Activated CD8-positive, alpha-beta T cell treated with anti-CD3 and anti-CD28 coated beads, Interleukin-2, amount 10 ng/mL, durations not matched to agents 7 days and 5 days (primary cell): ENCODE measurements at regions of chr1 and their contacts with region 1.

Region 1: DNA sequence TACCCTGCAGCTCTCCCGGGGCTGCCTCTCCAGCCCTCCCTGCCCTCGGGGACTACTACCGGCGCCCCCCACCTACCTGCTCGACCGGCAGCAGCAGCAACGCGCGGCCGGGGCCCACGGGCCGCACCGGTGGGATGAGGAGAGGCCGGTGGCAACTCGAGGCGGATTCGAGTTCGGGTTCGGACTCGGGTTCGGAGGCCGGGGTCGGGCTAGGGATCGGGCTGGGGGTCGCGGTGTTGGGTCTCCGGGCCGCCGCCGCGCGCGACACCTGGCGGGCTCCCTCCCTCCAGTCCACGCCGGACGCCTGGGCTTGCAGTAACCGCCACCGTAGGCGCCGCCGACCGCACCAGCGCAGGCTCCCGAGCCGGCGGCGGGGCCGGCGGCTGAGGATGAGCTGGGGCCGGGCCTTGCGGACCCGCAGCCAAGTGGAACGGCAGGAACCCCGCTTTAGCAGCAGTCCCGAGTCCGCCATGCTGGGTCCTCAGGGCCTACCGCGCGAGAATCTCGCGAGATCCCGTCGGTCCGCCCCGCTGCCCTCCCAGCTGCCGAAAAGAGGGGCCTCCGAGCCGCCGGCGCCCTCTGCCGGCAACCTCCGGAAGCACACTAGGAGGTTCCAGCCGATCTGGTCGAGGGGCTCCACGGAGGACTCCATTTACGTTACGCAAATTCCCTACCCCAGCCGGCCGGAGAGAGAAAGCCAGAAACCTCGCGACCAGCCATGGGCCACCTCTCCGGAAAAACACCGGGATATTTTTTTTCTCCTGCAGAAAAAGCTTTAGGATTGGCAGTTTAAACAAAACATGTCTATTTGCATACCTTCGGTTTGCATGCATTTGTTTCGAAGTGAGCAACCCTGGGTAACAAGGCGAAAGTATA is at the start of gene NOL9:
- DNase-seq: peak; percentile 97
- ATAC-seq: peak; percentile 98
- H3K4me3 Mint-ChIP-seq: peak within 1 kb of the TSS; percentile 75
- H3K27ac Mint-ChIP-seq: peak within 1 kb of the TSS; percentile 72
- H3K4me1 Mint-ChIP-seq: peaks cover 18% of the 10 kb centered on the region
- H3K27me3 Mint-ChIP-seq: no peaks in the 10 kb centered on the region
- total RNA-seq, gene NOL9: 39.8 to 43.6 TPM

Region 2: DNA sequence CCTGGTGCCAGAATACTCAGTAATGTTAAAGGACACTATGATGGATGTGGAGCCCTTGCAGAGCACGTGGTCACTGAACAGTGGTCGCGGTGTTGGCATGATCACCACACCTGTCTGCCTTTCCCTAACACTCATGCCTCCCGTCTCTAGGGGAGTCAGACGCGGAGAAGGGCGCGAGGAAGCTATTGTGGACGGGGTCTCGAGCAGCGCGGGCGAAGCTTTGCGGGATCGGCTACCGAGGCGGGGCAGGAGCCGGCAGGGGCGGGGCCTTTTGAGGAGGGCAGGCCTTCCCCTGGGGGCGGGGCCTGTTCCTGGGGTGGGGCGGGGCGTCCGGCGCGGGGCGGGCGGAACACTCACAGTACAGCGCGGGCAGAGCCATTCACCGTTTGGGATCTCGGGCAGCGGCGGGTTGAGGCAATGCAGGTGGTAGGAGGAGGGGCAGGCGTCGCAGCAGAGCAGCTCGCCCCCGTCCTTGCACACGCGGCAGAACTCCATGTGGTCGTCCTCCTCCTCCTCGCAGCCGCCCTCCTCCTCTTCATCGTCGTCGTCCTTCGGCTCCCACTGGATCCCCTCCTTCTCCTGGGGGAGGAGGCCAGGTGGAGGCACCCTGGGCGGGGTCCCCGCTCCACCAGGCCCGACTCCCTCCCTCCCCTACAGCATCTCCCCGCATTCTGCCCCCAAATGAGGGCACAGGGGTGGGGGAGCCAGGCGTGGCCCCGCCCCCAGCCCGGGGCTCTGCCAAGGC is 405.6 kb before region 1 on chr1:
- CTCF ChIA-PET with region 1: no interaction called
- POLR2A ChIA-PET with region 1: no interaction called
- DNase-seq: peak; percentile 66
- ATAC-seq: peak; percentile 88
- H3K4me3 Mint-ChIP-seq: no peak overlapping the region
- H3K27ac Mint-ChIP-seq: no peak overlapping the region
- H3K4me1 Mint-ChIP-seq: peaks cover 3% of the 10 kb centered on the region
- H3K27me3 Mint-ChIP-seq: peaks cover 3% of the 10 kb centered on the region

Region 3: GRCh38 chr1:6489799-6490180 is 64.5 kb before region 1 on chr1:
- CTCF ChIA-PET with region 1: interaction called, 28 read pairs
- POLR2A ChIA-PET with region 1: interaction called, 4 read pairs
- DNase-seq: peak; percentile 83
- ATAC-seq: peak; percentile 79
- H3K4me3 Mint-ChIP-seq: peak overlapping the region; percentile 76
- H3K27ac Mint-ChIP-seq: peak overlapping the region; percentile 71
- H3K4me1 Mint-ChIP-seq: peaks cover 33% of the 10 kb centered on the region
- H3K27me3 Mint-ChIP-seq: peaks cover 18% of the 10 kb centered on the region

Region 4: GRCh38 chr1:6523566-6523965 is 30.7 kb before region 1 on chr1:
- CTCF ChIA-PET with region 1: interaction called, 16 read pairs
- POLR2A ChIA-PET with region 1: no interaction called
- DNase-seq: no peak
- ATAC-seq: no peak
- H3K4me3 Mint-ChIP-seq: no peak overlapping the region
- H3K27ac Mint-ChIP-seq: no peak overlapping the region
- H3K4me1 Mint-ChIP-seq: peaks cover 5% of the 10 kb centered on the region
- H3K27me3 Mint-ChIP-seq: no peaks in the 10 kb centered on the region

Region 5: DNA sequence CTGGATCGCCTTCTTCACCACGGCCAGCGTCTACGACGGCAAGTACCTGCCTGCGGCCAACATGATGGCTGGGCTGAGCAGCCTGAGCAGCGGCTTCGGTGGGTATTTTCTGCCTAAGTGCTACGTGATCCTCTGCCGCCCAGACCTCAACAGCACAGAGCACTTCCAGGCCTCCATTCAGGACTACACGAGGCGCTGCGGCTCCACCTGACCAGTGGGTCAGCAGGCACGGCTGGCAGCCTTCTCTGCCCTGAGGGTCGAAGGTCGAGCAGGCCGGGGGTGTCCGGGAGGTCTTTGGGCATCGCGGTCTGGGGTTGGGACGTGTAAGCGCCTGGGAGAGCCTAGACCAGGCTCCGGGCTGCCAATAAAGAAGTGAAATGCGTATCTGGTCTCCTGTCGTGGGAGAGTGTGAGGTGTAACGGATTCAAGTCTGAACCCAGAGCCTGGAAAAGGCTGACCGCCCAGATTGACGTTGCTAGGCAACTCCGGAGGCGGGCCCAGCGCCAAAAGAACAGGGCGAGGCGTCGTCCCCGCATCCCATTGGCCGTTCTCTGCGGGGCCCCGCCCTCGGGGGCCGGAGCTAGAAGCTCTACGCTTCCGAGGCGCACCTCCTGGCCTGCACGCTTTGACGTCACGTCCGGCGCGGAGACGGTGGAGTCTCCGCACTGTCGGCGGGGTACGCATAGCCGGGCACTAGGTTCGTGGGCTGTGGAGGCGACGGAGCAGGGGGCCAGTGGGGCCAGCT is 25.3 kb after region 1 on chr1 and contains the start of gene ZBTB48:
- CTCF ChIA-PET with region 1: interaction called, 32 read pairs
- POLR2A ChIA-PET with region 1: interaction called, 6 read pairs
- DNase-seq: peak; percentile 98
- ATAC-seq: peak; percentile 98
- H3K4me3 Mint-ChIP-seq: peak within 1 kb of the TSS; percentile 97
- H3K27ac Mint-ChIP-seq: peak within 1 kb of the TSS; percentile 99
- H3K4me1 Mint-ChIP-seq: peaks cover 35% of the 10 kb centered on the region
- H3K27me3 Mint-ChIP-seq: no peaks in the 10 kb centered on the region
- total RNA-seq, gene ZBTB48: 36.5 to 41.7 TPM

Region 6: DNA sequence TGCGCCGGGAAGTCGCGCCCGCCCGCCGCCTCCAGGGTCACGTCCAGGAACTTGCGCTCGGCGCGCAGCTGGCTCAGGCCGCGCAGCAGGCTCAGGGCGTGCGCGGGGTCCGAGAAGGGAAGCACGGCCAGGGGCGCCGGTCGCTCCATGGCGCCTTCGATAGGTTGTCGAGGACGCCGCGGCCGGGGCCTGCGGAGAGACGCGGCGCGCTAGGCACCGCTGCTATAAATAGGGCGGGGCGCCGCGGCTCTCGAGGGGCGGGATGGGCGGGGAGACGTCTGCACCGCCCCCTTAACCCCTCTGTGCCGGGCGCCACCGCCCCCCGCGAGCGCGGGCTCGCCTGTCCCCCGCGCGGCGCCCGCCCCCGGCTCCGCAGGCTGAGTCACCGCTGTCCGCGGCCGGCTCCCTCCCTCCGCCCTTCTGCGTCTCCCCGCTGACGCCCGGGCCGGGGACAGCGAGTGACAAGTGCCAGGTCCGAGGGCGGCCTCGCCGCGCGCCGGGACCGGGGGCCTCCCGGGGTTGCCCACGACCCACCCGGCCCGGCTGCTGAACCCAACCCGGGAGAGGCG is 48.5 kb after region 1 on chr1 and contains the start of gene KLHL21:
- CTCF ChIA-PET with region 1: interaction called, 37 read pairs
- POLR2A ChIA-PET with region 1: interaction called, 15 read pairs
- DNase-seq: peak; percentile 86
- ATAC-seq: peak; percentile 63
- H3K4me3 Mint-ChIP-seq: peak within 1 kb of the TSS; percentile 99
- H3K27ac Mint-ChIP-seq: peak within 1 kb of the TSS; percentile 95
- H3K4me1 Mint-ChIP-seq: peaks cover 30% of the 10 kb centered on the region
- H3K27me3 Mint-ChIP-seq: no peaks in the 10 kb centered on the region
- total RNA-seq, gene KLHL21: 22.8 to 23.0 TPM